Esophagus squamous epithelium (tissue), 5 donors: ENCODE measurements at regions of chr4 and their contacts with region 1.

Region 1: DNA sequence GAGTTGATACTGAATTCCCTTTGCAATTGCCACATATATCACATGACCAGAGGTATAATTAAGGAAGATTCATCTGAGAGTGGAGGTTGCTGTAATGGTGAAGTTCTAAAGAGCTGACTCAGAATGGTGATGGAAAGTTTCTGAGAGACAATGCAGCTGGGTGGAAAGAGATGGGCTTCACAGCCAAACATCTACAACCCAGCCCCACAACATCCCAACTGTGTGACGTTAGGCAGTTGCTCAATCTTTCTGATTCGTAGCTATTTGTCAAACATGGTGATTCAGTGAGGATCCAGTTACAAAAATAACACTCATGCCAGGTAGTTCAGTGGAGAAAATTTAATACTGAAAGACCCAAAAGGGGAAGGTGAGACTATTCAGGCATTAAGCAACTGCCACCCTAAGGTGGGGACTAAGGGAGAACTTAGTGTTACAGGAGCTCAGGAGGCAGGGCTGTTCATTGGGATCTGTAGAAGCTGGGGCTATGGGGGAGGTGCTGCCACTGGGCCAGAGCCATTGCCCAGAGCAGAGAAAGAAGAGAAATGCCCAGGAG is 6.9 kb upstream of the AFF1 start:
- DNase-seq: no peak
- H3K4me3 ChIP-seq: no peak overlapping the region
- H3K27ac ChIP-seq: peak overlapping the region; percentile 72 to 91 (median 80)
- H3K4me1 ChIP-seq: peaks cover 15 to 27% (median 19%) of the 10 kb centered on the region in 3 donors
- H3K27me3 ChIP-seq: no peaks in the 10 kb centered on the region
- CTCF ChIP-seq: no peak
- POLR2A ChIP-seq: no peak

Region 2: GRCh38 chr4:87093443-87094123 is 165.7 kb after region 1 on chr4:
- intact Hi-C with region 1: loop called (anchors 5 kb)
- DNase-seq: no peak
- H3K4me3 ChIP-seq: no peak overlapping the region
- H3K27ac ChIP-seq: peak overlapping the region; percentile 41 to 72 (median 64)
- H3K4me1 ChIP-seq: peaks cover 9 to 56% (median 28%) of the 10 kb centered on the region in 3 donors
- H3K27me3 ChIP-seq: no peaks in the 10 kb centered on the region
- CTCF ChIP-seq: peak; percentile 37 to 56 (median 49)
- POLR2A ChIP-seq: no peak

Region 3: DNA sequence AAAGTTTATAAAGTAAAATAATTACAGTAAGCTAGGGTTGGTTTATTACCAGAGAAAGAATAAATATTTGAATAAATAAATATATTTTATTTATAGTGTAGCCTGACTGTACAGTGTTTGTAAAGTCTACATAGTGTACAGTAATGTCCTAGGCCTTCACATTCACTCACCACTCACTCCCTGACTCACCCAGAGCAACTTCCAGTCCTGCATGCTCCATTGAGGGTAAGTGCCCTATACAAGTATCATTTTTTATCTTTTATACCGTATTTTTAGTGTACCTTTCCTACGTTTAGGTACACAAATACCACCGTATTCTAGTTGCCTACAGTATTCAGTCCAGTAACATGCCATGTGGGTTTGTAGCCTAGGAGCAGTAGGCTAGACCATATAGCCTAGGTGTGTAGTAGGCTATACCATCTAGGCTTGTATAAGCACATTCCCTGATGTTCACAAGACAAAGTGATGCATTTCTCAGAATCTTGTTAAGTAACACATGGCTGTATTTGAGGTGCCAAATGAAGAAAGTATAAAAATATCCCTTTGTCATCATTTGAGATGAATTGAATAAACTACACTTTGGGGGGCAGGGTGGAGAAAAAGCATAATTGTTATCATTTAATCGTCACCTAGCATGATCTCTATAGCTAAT is 307.2 kb after region 1 on chr4:
- intact Hi-C with region 1: loop called (anchors 5 kb)
- DNase-seq: no peak
- H3K4me3 ChIP-seq: peak overlapping the region; percentile 25 to 64 (median 44)
- H3K27ac ChIP-seq: peak overlapping the region in 1 of 4 donors; percentile 46
- H3K4me1 ChIP-seq: peaks cover 0 to 17% (median 4%) of the 10 kb centered on the region in 3 donors
- H3K27me3 ChIP-seq: no peaks in the 10 kb centered on the region
- CTCF ChIP-seq: no peak
- POLR2A ChIP-seq: no peak

Region 4: GRCh38 chr4:87339440-87339839 is 411.5 kb after region 1 on chr4:
- intact Hi-C with region 1: no loop called
- DNase-seq: no peak
- H3K4me3 ChIP-seq: no peak overlapping the region
- H3K27ac ChIP-seq: peak overlapping the region in 1 of 4 donors; percentile 2
- H3K4me1 ChIP-seq: peaks cover 0 to 45% (median 0%) of the 10 kb centered on the region in 3 donors
- H3K27me3 ChIP-seq: no peaks in the 10 kb centered on the region
- CTCF ChIP-seq: no peak
- POLR2A ChIP-seq: no peak